PC-9 (cell line): ENCODE measurements at regions of chr6 and their contacts with region 1.

Region 1: DNA sequence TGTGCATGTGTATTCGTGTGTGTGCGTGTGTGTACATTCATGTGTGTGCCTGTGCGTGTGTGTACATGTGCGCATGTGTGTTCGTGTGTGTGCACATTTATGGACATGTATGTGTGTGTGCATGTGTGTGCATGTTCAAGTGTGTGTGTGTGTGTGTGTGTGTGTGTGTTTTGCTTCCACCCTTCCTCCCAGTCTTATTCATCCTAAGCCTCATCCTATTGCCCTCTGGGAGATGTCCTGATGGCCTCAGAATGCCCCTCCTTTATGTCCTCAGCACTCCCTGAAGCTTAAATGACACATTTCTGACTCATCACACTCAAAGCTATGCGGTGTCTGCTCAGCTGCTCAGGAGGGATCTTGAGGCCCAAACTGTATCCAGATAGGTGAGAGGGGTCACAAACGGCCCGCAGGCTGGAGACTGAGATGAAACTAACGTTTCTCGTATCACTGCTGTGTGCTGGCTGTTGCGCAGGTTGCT is 76.7 kb upstream of the CCDC167 start:
- DNase-seq: peak; percentile 56 to 88
- H3K4me3 ChIP-seq: no peak overlapping the region
- H3K27ac ChIP-seq: peak overlapping the region; percentile 64
- H3K4me1 ChIP-seq: peaks cover 40% of the 10 kb centered on the region
- H3K27me3 ChIP-seq: no peaks in the 10 kb centered on the region
- CTCF ChIP-seq: no peak

Region 2: DNA sequence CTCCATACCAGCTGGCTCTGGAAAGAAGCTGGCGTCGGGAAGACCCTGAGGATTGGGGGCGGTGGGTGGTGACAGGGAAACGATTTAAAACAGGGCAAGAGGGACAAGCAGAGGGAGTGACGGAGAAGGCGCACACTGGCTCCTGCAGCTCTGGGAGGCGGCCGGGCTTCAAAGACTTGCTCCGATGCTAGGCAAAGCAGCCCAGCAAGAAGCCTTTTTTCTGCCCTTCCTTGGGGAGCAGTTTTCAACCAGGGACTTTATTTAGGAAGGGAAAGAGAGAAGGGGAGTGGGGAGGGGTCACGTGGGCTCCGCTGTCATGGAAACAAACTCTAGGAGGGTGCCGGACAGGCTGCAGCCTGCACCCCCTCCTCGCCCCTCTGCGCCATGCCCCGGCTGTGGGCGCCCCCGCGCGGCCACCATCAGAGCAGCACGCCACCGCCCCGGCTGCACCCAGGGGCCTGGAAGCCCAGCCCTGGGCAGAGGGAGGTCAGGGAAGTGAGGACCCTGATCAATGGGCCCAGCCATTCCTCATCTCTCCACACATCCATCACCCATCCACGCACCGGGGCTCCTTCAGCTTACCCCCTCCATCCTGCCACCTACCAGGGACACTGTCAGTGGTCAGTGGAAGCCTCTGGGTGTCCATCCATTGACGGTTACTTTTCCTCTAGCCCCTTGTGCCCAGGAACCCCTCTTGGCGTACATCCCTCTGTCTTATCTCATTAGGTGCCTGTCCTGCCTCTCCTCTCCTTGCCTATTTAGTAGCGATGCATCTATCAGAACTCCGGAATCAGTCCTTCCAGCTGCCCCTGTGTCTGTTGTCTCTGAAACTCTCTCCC is 10.0 kb before region 1 on chr6:
- CTCF ChIA-PET with region 1: no interaction called
- POLR2A ChIA-PET with region 1: interaction called, 16 read pairs
- intact Hi-C with region 1: no loop called
- DNase-seq: peak in 1 of 2 experiments; percentile 54
- H3K4me3 ChIP-seq: no peak overlapping the region
- H3K27ac ChIP-seq: no peak overlapping the region
- H3K4me1 ChIP-seq: no peaks in the 10 kb centered on the region
- H3K27me3 ChIP-seq: no peaks in the 10 kb centered on the region
- CTCF ChIP-seq: peak; percentile 78

Region 3: GRCh38 chr6:37745748-37746147 is 169.4 kb after region 1 on chr6:
- CTCF ChIA-PET with region 1: no interaction called
- POLR2A ChIA-PET with region 1: no interaction called
- intact Hi-C with region 1: no loop called
- DNase-seq: no peak
- H3K4me3 ChIP-seq: no peak overlapping the region
- H3K27ac ChIP-seq: no peak overlapping the region
- H3K4me1 ChIP-seq: no peaks in the 10 kb centered on the region
- H3K27me3 ChIP-seq: no peaks in the 10 kb centered on the region; the same call in 1 of the 2 replicates
- CTCF ChIP-seq: no peak